Activated naive CD4-positive, alpha-beta T cell treated with anti-CD3 and anti-CD28 coated beads, Interleukin-2, amount 10 ng/mL, durations not matched to agents 7 days and 5 days (primary cell): ENCODE measurements at regions of chr19 and their contacts with region 1.

Region 1: DNA sequence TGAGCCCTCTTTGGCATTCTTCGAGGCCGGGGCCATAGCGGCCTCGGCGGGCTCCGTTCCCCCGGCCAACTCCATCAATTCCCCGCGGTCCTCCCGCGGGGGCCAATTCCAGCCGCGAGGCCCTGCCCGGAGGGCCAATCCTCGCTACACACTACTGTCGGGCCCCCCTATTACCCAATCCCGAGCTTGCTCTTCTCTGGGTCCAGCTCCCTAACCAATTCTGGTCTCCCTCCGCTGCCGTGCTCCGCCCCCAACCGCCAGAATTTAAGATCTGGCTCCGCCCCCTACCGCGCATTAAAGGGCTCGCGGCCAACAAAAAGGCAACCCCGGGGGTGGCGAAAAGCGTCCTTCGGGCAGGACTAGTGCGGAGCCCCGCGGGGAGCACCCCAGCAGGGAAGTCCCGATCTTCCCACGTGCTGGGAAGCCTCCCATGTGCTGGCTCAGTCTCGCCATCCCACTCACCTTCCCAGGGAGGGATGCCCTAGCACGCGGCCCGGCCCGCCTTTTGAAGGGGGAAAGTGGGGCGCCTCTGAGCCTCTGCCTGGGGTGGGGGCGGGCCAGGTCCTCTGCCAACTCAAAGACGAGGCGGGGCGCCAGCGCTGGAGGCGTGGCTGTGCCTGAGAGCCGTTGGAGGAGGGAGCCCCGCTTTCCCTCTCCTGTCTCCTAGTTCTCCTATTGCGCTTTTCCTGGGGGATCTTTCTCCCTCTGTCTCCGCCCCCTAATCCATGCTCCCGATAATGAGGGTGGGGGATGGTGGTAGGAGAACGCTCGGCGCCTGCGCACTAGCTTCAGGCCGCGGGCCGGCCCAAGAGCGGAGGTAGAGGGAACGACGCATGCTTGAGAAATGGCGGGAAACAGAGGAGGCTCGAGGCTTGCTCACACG is 3.5 kb downstream of the LIPE start:
- DNase-seq: peak; percentile 96
- H3K4me3 Mint-ChIP-seq: peak overlapping the region; percentile 89
- H3K27ac Mint-ChIP-seq: peak overlapping the region; percentile 88
- H3K4me1 Mint-ChIP-seq: peaks cover 45% of the 10 kb centered on the region
- H3K27me3 Mint-ChIP-seq: peaks cover 38% of the 10 kb centered on the region

Region 2: DNA sequence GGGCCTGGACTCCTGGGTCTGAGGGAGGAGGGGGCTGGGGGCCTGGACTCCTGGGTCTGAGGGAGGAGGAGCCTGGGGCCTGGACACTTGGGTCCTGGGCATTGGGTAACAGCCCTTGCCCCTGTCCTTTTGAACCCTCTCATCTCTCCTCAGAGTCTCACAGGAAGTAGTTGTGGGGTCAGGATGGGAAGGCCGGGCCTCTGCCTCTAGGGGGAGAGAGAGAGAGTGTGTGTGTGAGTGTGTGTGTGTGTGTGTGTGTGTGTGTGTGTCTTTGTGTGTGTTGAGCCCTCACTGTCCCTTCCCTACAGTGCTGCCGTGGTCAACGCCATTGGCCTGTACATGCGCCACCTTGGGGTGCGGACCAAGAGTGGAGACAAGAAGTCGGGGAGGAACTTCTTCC is 529.8 kb before region 1 on chr19:
- CTCF ChIA-PET with region 1: no interaction called
- DNase-seq: peak; percentile 49
- H3K4me3 Mint-ChIP-seq: no peak overlapping the region
- H3K27ac Mint-ChIP-seq: peak overlapping the region; percentile 74
- H3K4me1 Mint-ChIP-seq: peaks cover 47% of the 10 kb centered on the region
- H3K27me3 Mint-ChIP-seq: no peaks in the 10 kb centered on the region

Region 3: GRCh38 chr19:42375415-42376176 is 48.1 kb before region 1 on chr19:
- CTCF ChIA-PET with region 1: no interaction called
- DNase-seq: no peak
- H3K4me3 Mint-ChIP-seq: no peak overlapping the region
- H3K27ac Mint-ChIP-seq: no peak overlapping the region
- H3K4me1 Mint-ChIP-seq: no peaks in the 10 kb centered on the region
- H3K27me3 Mint-ChIP-seq: peaks cover 26% of the 10 kb centered on the region

Region 4: GRCh38 chr19:42407085-42407815 is 16.5 kb before region 1 on chr19:
- CTCF ChIA-PET with region 1: interaction called, 10 read pairs
- DNase-seq: no peak
- H3K4me3 Mint-ChIP-seq: no peak overlapping the region
- H3K27ac Mint-ChIP-seq: no peak overlapping the region
- H3K4me1 Mint-ChIP-seq: peaks cover 2% of the 10 kb centered on the region
- H3K27me3 Mint-ChIP-seq: peaks cover 4% of the 10 kb centered on the region

Region 5: GRCh38 chr19:42440357-42441048 is 16.8 kb after region 1 on chr19:
- CTCF ChIA-PET with region 1: interaction called, 23 read pairs
- DNase-seq: peak; percentile 85
- H3K4me3 Mint-ChIP-seq: no peak overlapping the region
- H3K27ac Mint-ChIP-seq: no peak overlapping the region
- H3K4me1 Mint-ChIP-seq: peaks cover 23% of the 10 kb centered on the region
- H3K27me3 Mint-ChIP-seq: peaks cover 47% of the 10 kb centered on the region

Region 6: GRCh38 chr19:42508892-42509444 is 85.3 kb after region 1 on chr19:
- CTCF ChIA-PET with region 1: no interaction called
- DNase-seq: no peak
- H3K4me3 Mint-ChIP-seq: no peak overlapping the region
- H3K27ac Mint-ChIP-seq: no peak overlapping the region
- H3K4me1 Mint-ChIP-seq: peaks cover 37% of the 10 kb centered on the region
- H3K27me3 Mint-ChIP-seq: no peaks in the 10 kb centered on the region

Region 7: GRCh38 chr19:42568006-42568405 is 144.3 kb after region 1 on chr19:
- CTCF ChIA-PET with region 1: no interaction called
- DNase-seq: no peak
- H3K4me3 Mint-ChIP-seq: no peak overlapping the region
- H3K27ac Mint-ChIP-seq: no peak overlapping the region
- H3K4me1 Mint-ChIP-seq: no peaks in the 10 kb centered on the region
- H3K27me3 Mint-ChIP-seq: peaks cover 27% of the 10 kb centered on the region